GM12878 (cell line): ENCODE measurements at regions of chr20 and their contacts with region 1.

Region 1: DNA sequence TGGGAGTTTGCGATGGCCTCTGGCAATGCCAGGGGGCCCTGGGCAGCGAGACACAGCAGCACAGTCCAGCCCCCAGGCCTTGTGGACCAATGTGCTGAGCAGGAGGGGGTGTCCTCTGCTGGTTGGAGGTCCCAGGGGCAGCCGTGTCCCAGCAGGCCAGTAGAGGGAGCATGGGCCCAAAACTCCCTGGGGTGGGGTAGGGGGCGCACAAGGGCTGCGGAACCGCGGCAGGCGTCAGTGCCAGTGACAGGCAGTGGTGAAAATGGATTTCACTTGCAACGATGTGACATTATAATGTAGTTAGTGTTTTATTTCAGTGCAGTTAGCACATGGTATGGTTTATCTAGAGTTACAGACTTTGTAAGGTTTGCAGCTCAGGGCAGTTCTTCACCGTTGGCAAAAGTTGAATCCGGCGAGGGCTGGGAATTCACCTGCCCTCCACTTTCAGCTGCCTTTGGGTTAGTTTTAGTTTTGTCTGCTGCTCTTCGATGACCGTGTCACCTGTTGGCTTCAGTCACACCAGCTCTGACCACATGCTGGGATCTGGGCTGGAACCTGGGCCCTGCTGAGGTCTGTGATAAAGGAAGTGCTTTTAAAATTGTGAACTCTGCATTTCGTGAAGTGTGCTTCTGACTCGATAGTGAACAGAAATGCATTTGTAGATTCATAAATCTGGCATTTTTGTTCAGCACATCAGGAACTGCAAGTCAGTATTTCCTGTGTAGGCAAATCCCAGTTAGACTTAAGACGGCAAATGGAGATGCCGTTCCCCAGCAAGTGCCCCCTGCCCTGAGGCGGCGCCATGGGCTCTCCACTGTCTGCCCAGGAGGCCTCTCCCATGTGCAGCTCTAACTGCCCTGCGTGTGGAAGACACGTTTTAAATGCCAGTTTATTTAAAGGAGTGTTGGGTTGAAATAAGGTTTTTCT is 46.8 kb downstream of the PYGB start:
- DNase-seq: no peak
- ATAC-seq: peak; percentile 70
- H3K4me3 ChIP-seq: no peak overlapping the region
- H3K27ac ChIP-seq: no peak overlapping the region
- H3K4me1 ChIP-seq: peaks cover 39% of the 10 kb centered on the region
- H3K27me3 ChIP-seq: no peaks in the 10 kb centered on the region
- CTCF ChIP-seq: peak; percentile 90 to 95 (median 93)
- EP300 ChIP-seq: no peak
- POLR2A ChIP-seq: peak; percentile 53; the same call in 1 of the 2 replicates
- RAD21 ChIP-seq: peak; percentile 71

Region 2: GRCh38 chr20:24842918-24843715 is 451.6 kb before region 1 on chr20:
- CTCF ChIA-PET with region 1: no interaction called
- POLR2A ChIA-PET with region 1: no interaction called
- RAD21 ChIA-PET with region 1: no interaction called
- SMC1A ChIA-PET with region 1: no interaction called
- in situ Hi-C with region 1: loop called (anchors 10 kb)
- intact Hi-C with region 1: no loop called
- DNase-seq: peak; percentile 98
- ATAC-seq: peak; percentile 95
- H3K4me3 ChIP-seq: peak overlapping the region; percentile 12
- H3K27ac ChIP-seq: peak overlapping the region; percentile 63
- H3K4me1 ChIP-seq: peaks cover 49% of the 10 kb centered on the region
- H3K27me3 ChIP-seq: no peaks in the 10 kb centered on the region
- CTCF ChIP-seq: no peak
- EP300 ChIP-seq: peak; percentile 86 to 92
- POLR2A ChIP-seq: no peak
- RAD21 ChIP-seq: no peak

Region 3: GRCh38 chr20:25318471-25319240 is 23.9 kb after region 1 on chr20:
- CTCF ChIA-PET with region 1: interaction called, 4 read pairs
- POLR2A ChIA-PET with region 1: interaction called, 6 read pairs
- RAD21 ChIA-PET with region 1: interaction called, 4 read pairs
- SMC1A ChIA-PET with region 1: interaction called, 10 read pairs
- in situ Hi-C with region 1: no loop called
- intact Hi-C with region 1: no loop called
- DNase-seq: peak; percentile 88
- ATAC-seq: peak; percentile 94
- H3K4me3 ChIP-seq: no peak overlapping the region
- H3K27ac ChIP-seq: peak overlapping the region; percentile 93
- H3K4me1 ChIP-seq: peaks cover 40% of the 10 kb centered on the region
- H3K27me3 ChIP-seq: no peaks in the 10 kb centered on the region
- CTCF ChIP-seq: no peak
- EP300 ChIP-seq: peak; percentile 77 to 89; a peak in 3 of 4 replicates
- POLR2A ChIP-seq: peak; percentile 77
- RAD21 ChIP-seq: no peak

Region 4: DNA sequence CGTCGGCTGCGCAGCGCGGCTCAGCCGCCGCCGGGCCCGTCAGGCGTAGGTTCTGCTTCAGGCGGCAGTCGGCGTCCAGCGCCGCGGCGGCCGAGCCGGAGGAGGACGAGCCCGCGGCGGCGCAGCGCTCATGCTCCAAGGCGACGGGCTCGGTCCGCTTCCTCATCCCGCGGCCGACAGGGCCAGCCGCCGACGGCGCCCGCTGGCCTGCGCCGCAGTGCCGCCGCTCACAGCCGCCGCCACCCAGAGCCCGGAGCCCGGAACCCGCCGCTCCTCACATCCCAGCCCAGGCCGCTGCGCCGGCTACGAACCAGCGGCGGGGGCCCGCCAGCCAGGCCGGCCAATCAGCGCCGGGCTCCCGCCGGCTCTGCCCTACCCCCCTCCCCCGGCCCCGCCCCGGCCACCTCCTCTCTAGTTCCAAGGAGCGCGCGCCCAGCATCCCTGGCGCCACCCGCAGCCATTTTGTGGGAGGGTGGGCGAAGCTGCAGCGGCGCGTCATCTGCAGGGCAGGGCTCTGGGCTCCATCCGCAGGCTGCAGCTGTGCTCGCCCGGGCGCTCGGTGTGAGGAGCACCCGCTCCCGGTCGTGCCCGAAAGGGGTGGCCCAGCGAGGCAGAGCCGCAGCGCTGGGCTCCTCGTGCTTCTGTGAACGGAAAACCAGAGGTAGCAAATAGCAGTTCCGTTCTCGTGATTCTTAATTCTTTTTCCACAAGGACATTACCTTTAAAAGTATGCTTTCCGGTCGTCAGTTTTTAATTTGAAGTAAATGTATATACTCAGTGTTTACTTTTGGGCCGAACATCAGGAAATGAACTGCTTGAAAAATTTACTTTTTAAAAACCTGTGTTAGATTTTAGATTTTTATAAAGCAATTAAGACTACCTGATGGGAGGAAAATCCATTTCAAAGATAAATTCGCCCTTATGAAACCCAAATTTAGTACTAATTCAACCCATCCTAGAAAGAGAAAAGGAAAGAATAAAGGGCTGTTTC is 96.1 kb after region 1 on chr20 and contains the start of gene ABHD12:
- CTCF ChIA-PET with region 1: interaction called, 95 read pairs
- POLR2A ChIA-PET with region 1: no interaction called
- RAD21 ChIA-PET with region 1: interaction called, 6 read pairs
- SMC1A ChIA-PET with region 1: interaction called, 53 read pairs
- in situ Hi-C with region 1: loop called (anchors 5 kb)
- intact Hi-C with region 1: no loop called
- DNase-seq: peak; percentile 77
- ATAC-seq: peak; percentile 96
- H3K4me3 ChIP-seq: peak within 1 kb of the TSS; percentile 78
- H3K27ac ChIP-seq: peak within 1 kb of the TSS; percentile 78
- H3K4me1 ChIP-seq: no peaks in the 10 kb centered on the region; the same call in 1 of the 2 replicates
- H3K27me3 ChIP-seq: no peaks in the 10 kb centered on the region
- CTCF ChIP-seq: 0 out of 6 replicates have a peak, but pooled peaks of 1 of the 3 experiments have one; percentile 1
- EP300 ChIP-seq: no peak
- POLR2A ChIP-seq: peak; percentile 95
- RAD21 ChIP-seq: no peak
- polyA plus RNA-seq, gene ABHD12: 1.5 to 4.1 TPM